ENCODE measurements at regions of chr7 and their contacts with region 1.

Region 1: DNA sequence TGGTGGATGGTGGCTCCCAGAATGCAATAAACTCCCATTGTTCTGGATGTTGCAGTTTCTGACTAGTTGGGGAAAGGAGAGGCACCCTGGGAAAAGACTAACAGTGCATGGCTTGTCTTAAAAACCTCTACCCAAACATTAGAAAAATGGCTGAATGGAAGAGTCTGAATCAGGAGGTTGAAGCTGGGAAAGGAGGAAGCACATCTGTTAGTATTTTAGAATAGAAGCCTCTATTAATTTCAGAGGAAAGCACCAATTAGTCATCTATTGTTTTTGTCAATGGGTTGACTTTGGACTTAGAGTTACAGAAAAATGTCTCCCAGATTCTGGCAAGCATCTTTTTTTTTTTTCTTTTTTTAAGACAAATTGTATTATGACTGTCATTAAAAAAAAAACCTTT is 56.1 kb upstream of the ELMO1 start:
- H3K4me3 Mint-ChIP-seq: no peak overlapping the region
- H3K27ac Mint-ChIP-seq: no peak overlapping the region
- H3K4me1 Mint-ChIP-seq: no peaks in the 10 kb centered on the region
- H3K27me3 Mint-ChIP-seq: peaks cover 3% of the 10 kb centered on the region

Region 2: GRCh38 chr7:37208528-37208927 is 296.3 kb before region 1 on chr7:
- intact Hi-C with region 1: loop called (anchors 5 kb)
- H3K4me3 Mint-ChIP-seq: no peak overlapping the region
- H3K27ac Mint-ChIP-seq: no peak overlapping the region
- H3K4me1 Mint-ChIP-seq: peaks cover 12% of the 10 kb centered on the region
- H3K27me3 Mint-ChIP-seq: no peaks in the 10 kb centered on the region